ENCODE measurements at regions of chr16 and their contacts with region 1.

Region 1: DNA sequence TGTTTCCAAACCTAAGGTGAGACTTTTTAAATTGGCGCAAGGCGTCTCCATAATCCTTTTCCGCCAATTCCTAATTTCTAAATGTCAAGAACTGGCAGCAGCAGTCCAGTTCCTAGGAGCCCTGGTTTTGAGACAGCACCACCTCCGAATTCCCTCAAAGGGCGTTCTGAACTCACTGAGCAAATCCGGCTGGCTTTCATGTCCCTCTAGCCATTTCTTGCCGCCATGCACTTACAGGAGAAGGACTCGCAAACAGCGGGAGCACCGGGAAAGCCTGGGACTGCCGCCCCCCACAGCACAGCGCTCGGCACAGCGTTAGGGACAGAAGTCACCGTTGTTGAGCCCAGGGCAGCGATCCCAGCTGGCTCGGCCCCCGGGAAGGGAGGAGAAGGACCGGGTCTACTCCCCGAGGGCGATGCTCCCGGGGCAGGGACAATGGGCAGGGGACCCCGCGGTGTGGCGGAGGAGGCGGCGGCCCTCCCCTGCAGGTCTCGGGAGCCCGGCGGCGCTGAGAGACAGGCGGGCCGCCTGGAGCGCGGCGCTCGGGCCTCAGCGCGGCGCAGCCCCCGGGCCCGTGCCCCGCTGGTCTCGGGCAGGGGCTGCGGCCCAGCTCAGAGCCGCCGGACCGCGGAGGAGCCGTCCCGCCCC is 545 bp downstream of the ARHGAP17 start:
- H3K4me3 ChIP-seq: peak overlapping the region; percentile 93
- H3K27ac ChIP-seq: peak overlapping the region; percentile 86
- H3K4me1 ChIP-seq: peaks cover 15% of the 10 kb centered on the region
- CTCF ChIP-seq: peak; percentile 58

Region 2: GRCh38 chr16:25031441-25032307 is 17.1 kb after region 1 on chr16:
- CTCF ChIA-PET with region 1: interaction called, 4 read pairs
- POLR2A ChIA-PET with region 1: interaction called, 13 read pairs
- H3K4me3 ChIP-seq: peak overlapping the region; percentile 84
- H3K27ac ChIP-seq: peak overlapping the region; percentile 65
- H3K4me1 ChIP-seq: 0 out of 2 replicates have a peak, but pooled peaks cover 3% of the 10 kb centered on the region
- CTCF ChIP-seq: peak; percentile 71

Region 3: GRCh38 chr16:25051406-25052150 is 37.0 kb after region 1 on chr16:
- CTCF ChIA-PET with region 1: no interaction called
- POLR2A ChIA-PET with region 1: interaction called, 18 read pairs
- H3K4me3 ChIP-seq: no peak overlapping the region
- H3K27ac ChIP-seq: no peak overlapping the region
- H3K4me1 ChIP-seq: 0 out of 2 replicates have a peak, but pooled peaks cover 3% of the 10 kb centered on the region
- CTCF ChIP-seq: no peak